Activated CD4-positive, alpha-beta memory T cell treated with anti-CD3 and anti-CD28 coated beads for 36 hours (primary cell): ENCODE measurements at regions of chr2 and their contacts with region 1.

Region 1: GRCh38 chr2:231713730-231714430 is 5.6 kb downstream of the PTMA start:
- DNase-seq: peak; percentile 94
- H3K4me3 Mint-ChIP-seq: peak overlapping the region; percentile 48
- H3K27ac Mint-ChIP-seq: peak overlapping the region; percentile 95
- H3K4me1 Mint-ChIP-seq: peaks cover 23% of the 10 kb centered on the region
- H3K27me3 Mint-ChIP-seq: no peaks in the 10 kb centered on the region

Region 2: GRCh38 chr2:231463698-231464575 is 249.9 kb before region 1 on chr2 and contains the start of gene NCL:
- CTCF ChIA-PET with region 1: interaction called, 15 read pairs
- POLR2A ChIA-PET with region 1: interaction called, 17 read pairs
- intact Hi-C with region 1: no loop called
- DNase-seq: peak; percentile 90
- H3K4me3 Mint-ChIP-seq: peak within 1 kb of the TSS; percentile 96
- H3K27ac Mint-ChIP-seq: peak within 1 kb of the TSS; percentile 93
- H3K4me1 Mint-ChIP-seq: peaks cover 41% of the 10 kb centered on the region
- H3K27me3 Mint-ChIP-seq: no peaks in the 10 kb centered on the region
- total RNA-seq, gene NCL: 902 to 918 TPM

Region 3: GRCh38 chr2:231621129-231621879 is 92.6 kb before region 1 on chr2:
- CTCF ChIA-PET with region 1: interaction called, 13 read pairs
- POLR2A ChIA-PET with region 1: interaction called, 3 read pairs
- intact Hi-C with region 1: no loop called
- DNase-seq: peak; percentile 55
- H3K4me3 Mint-ChIP-seq: no peak overlapping the region
- H3K27ac Mint-ChIP-seq: peak overlapping the region; percentile 23
- H3K4me1 Mint-ChIP-seq: peaks cover 16% of the 10 kb centered on the region
- H3K27me3 Mint-ChIP-seq: no peaks in the 10 kb centered on the region

Region 4: DNA sequence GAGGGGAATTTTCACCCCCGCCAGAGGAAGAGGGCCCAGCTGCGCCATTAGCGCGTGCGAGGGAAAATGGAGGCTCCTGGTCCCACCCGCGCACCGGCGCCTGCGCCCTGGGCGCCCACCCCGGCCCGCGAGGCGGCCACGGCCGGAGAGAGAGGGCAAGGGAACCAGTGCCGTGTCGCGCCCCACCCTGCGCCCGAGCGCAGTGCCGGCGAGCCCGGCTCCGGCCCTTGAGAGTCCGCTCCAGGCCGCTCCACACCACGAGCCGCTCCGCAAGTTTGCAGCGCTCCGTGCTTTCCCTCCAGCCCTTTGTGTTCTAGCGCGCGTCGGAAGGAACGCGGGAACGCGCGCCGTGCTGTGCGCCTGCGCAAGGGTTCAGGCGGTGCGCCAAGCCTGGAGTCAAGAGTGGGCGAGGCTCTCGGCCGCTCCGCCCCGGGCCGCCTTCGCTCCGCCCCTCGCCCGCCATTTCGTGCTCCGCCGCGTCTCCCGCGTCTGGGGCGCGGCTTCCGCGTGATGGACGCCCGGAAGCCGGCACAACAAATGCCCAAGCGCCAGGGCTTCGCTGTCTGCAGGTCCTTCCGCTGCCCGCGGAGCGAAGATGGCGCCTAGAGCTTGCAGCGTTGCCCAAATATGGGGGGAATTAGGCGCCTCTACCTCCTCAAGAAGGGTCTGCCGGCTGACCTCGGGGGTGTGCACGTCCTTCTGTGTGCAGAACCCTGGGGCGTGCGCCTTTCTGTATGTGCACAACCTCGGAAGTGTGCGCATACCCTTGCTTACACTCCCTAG is 51.7 kb before region 1 on chr2:
- CTCF ChIA-PET with region 1: interaction called, 12 read pairs
- POLR2A ChIA-PET with region 1: interaction called, 8 read pairs
- intact Hi-C with region 1: no loop called
- DNase-seq: peak; percentile 97
- H3K4me3 Mint-ChIP-seq: peak overlapping the region; percentile 65
- H3K27ac Mint-ChIP-seq: peak overlapping the region; percentile 94
- H3K4me1 Mint-ChIP-seq: peaks cover 12% of the 10 kb centered on the region
- H3K27me3 Mint-ChIP-seq: no peaks in the 10 kb centered on the region

Region 5: DNA sequence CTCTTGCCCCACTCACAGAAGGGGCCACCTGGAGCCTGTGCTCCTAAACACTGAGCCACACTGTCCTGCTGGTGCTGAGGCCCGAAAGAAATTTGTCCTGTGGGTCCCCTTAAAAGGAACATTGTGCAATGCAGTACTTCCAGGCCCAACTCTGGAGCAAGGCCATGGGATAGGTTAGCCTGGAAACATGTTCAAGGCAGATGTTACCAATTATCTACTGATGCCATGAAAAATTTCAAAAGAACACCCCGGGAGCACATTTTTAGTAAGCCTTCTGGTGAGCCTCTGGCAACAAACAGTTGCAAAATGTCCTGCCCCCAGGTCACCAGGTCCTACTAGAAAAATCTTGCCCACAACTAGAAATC is 17.9 kb before region 1 on chr2:
- CTCF ChIA-PET with region 1: interaction called, 578 read pairs
- POLR2A ChIA-PET with region 1: no interaction called
- intact Hi-C with region 1: no loop called
- DNase-seq: no peak
- H3K4me3 Mint-ChIP-seq: no peak overlapping the region
- H3K27ac Mint-ChIP-seq: no peak overlapping the region
- H3K4me1 Mint-ChIP-seq: no peaks in the 10 kb centered on the region
- H3K27me3 Mint-ChIP-seq: no peaks in the 10 kb centered on the region

Region 6: GRCh38 chr2:231780909-231781797 is 67.3 kb after region 1 on chr2 and contains the start of gene PDE6D:
- CTCF ChIA-PET with region 1: interaction called, 18 read pairs
- POLR2A ChIA-PET with region 1: interaction called, 5 read pairs
- intact Hi-C with region 1: loop called (anchors 1 kb)
- DNase-seq: peak; percentile 98
- H3K4me3 Mint-ChIP-seq: peak within 1 kb of the TSS; percentile 89
- H3K27ac Mint-ChIP-seq: peak within 1 kb of the TSS; percentile 94
- H3K4me1 Mint-ChIP-seq: peaks cover 52% of the 10 kb centered on the region
- H3K27me3 Mint-ChIP-seq: no peaks in the 10 kb centered on the region
- total RNA-seq, gene PDE6D: 29.5 to 31.1 TPM